ENCODE measurements at regions of chr11 and their contacts with region 1.

Region 1: GRCh38 chr11:75867775-75868374 is 52.9 kb downstream of the UVRAG start:
- DNase-seq: peak; percentile 53
- ATAC-seq: peak; percentile 58
- H3K4me3 Mint-ChIP-seq: no peak overlapping the region
- H3K27ac Mint-ChIP-seq: no peak overlapping the region
- H3K4me1 Mint-ChIP-seq: peaks cover 8% of the 10 kb centered on the region
- H3K27me3 Mint-ChIP-seq: no peaks in the 10 kb centered on the region

Region 2: GRCh38 chr11:75706260-75706729 is 161.6 kb before region 1 on chr11:
- CTCF ChIA-PET with region 1: interaction called, 6 read pairs
- POLR2A ChIA-PET with region 1: no interaction called
- intact Hi-C with region 1: loop called in 1 of 2 experiments (anchors 5 kb)
- DNase-seq: peak; percentile 82
- ATAC-seq: peak; percentile 96
- H3K4me3 Mint-ChIP-seq: no peak overlapping the region
- H3K27ac Mint-ChIP-seq: no peak overlapping the region
- H3K4me1 Mint-ChIP-seq: peaks cover 10% of the 10 kb centered on the region
- H3K27me3 Mint-ChIP-seq: peaks cover 9% of the 10 kb centered on the region

Region 3: DNA sequence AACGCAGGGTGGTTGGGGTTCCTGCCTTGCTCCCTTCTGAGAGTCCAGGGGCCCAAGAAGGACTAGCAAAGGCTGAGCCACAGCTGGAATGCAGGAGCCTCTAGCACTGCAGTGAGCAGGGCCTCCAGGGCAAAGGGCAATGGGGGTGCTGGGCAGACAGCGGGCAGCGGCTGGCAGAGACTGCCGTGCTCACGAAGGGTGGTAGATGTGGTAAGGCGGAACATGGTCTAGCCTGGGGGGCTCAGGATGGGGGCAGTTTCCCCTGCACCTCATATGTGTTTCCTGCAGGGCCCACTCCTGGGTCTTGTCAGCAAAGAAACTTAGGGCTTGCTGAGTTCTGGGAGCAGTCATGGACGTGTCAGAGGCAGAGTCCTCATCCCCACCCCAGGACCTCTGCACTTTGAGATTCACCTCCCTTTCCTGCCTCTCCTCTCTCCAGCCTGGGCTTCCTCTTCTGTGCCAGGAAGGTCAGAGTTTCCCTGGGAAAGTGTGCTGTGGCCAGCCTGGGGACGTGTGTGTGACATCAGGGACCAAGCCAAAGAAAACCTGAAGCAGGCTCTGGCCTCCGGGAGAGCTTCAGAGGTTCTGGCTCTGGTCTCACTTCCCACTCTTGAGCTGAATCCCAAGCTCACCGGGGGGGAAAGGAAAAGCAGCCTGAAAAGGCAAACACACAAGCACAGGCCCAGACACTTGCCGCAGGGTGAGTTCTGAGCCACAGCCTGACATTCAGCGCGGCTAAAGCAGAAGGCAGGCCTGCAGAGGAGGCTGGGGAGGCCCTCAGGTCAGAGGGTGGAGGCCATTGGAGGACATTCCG is 145.8 kb before region 1 on chr11:
- CTCF ChIA-PET with region 1: interaction called, 8 read pairs
- POLR2A ChIA-PET with region 1: no interaction called
- intact Hi-C with region 1: loop called (anchors 1 kb)
- DNase-seq: no peak
- ATAC-seq: no peak
- H3K4me3 Mint-ChIP-seq: no peak overlapping the region
- H3K27ac Mint-ChIP-seq: no peak overlapping the region
- H3K4me1 Mint-ChIP-seq: no peaks in the 10 kb centered on the region
- H3K27me3 Mint-ChIP-seq: no peaks in the 10 kb centered on the region

Region 4: GRCh38 chr11:75802913-75803820 is 64.7 kb before region 1 on chr11:
- CTCF ChIA-PET with region 1: interaction called, 79 read pairs
- POLR2A ChIA-PET with region 1: no interaction called
- intact Hi-C with region 1: loop called (anchors 1 kb)
- DNase-seq: peak; percentile 84
- ATAC-seq: peak; percentile 92
- H3K4me3 Mint-ChIP-seq: no peak overlapping the region
- H3K27ac Mint-ChIP-seq: no peak overlapping the region
- H3K4me1 Mint-ChIP-seq: peaks cover 10% of the 10 kb centered on the region
- H3K27me3 Mint-ChIP-seq: no peaks in the 10 kb centered on the region

Region 5: DNA sequence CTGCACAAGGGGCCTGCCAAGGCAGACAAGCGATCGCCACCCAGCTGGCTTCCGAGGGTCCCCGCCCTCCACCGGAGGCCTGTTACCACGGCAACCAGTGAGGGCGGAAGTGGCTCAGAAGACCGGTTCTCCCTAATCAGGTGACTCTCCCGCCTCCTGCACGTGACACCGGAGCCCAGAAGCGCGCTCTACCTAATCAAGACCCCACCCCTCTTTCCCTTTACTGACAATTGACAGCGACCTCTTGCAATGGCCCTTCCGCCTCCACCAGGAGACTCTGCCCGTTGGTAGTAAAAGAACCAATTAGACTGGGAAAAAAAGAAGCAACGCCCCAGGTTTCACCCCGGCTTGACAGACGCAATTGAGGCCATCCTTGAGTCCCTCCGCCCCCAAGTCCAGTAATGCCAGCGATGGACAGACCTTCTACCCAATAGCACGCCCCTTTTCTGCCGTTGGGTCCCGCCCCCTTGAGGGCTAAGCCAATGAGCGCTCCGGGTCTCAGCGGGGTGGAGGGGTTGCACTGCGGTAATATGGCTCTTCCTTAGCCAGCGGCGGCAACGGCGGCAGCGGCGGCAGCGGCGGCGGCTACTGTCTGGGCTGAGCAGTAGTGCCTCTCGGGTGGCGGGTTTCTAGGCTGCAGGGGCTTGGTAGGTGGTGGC is 53.1 kb before region 1 on chr11 and contains the start of gene UVRAG:
- CTCF ChIA-PET with region 1: interaction called, 6 read pairs
- POLR2A ChIA-PET with region 1: no interaction called
- intact Hi-C with region 1: loop called (anchors 2 to 5 kb)
- DNase-seq: peak; percentile 98
- ATAC-seq: peak; percentile 93
- H3K4me3 Mint-ChIP-seq: no peak within 1 kb of the TSS
- H3K27ac Mint-ChIP-seq: peak within 1 kb of the TSS; percentile 80
- H3K4me1 Mint-ChIP-seq: peaks cover 16% of the 10 kb centered on the region
- H3K27me3 Mint-ChIP-seq: no peaks in the 10 kb centered on the region
- total RNA-seq, gene UVRAG: 11.4 to 13.4 TPM

Region 6: DNA sequence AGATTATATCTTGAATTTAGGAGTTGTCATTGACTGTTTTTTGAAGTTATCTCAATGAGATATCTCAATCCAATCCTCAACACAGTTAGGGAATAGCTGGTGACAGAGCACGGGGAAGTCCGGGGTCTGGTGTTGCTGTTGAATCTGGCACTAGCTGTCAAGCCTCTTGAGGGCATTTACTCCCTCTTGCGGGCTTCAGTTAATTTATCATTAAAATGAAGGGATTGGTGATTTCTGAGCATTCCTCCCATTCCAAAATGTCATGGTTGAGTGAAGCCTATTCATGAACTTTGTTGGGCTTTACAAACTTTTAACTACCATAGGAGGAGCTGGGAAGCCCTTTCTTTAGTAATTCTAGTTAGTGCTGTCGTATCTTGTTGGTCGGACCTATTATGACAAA is 12.7 kb before region 1 on chr11:
- CTCF ChIA-PET with region 1: interaction called, 19 read pairs
- POLR2A ChIA-PET with region 1: no interaction called
- intact Hi-C with region 1: no loop called
- DNase-seq: no peak
- ATAC-seq: no peak
- H3K4me3 Mint-ChIP-seq: no peak overlapping the region
- H3K27ac Mint-ChIP-seq: no peak overlapping the region
- H3K4me1 Mint-ChIP-seq: peaks cover 12% of the 10 kb centered on the region
- H3K27me3 Mint-ChIP-seq: no peaks in the 10 kb centered on the region

Region 7: GRCh38 chr11:75879737-75880136 is 11.9 kb after region 1 on chr11:
- CTCF ChIA-PET with region 1: interaction called, 27 read pairs
- POLR2A ChIA-PET with region 1: no interaction called
- intact Hi-C with region 1: no loop called
- DNase-seq: no peak
- ATAC-seq: no peak
- H3K4me3 Mint-ChIP-seq: no peak overlapping the region
- H3K27ac Mint-ChIP-seq: no peak overlapping the region
- H3K4me1 Mint-ChIP-seq: peaks cover 1% of the 10 kb centered on the region
- H3K27me3 Mint-ChIP-seq: no peaks in the 10 kb centered on the region

Measured in activated CD4-positive, alpha-beta T cell treated with anti-CD3 and anti-CD28 coated beads for 36 hours (primary cell).